Ovary (tissue), 10 donors: ENCODE measurements at regions of chr7 and their contacts with region 1.

Region 1: GRCh38 chr7:111752022-111752582 is 189.8 kb upstream of the IMMP2L start:
- DNase-seq: peak in 4 of 5 donors; percentile 37 to 59 (median 44)
- H3K4me3 ChIP-seq: no peak overlapping the region
- H3K27ac ChIP-seq: no peak overlapping the region
- H3K4me1 ChIP-seq: no peaks in the 10 kb centered on the region
- H3K27me3 ChIP-seq: no peaks in the 10 kb centered on the region
- CTCF ChIP-seq: peak in 1 of 3 donors; percentile 55
- EP300 ChIP-seq: no peak
- POLR2A ChIP-seq: no peak

Region 2: GRCh38 chr7:111561885-111562732 is 190.0 kb before region 1 on chr7 and contains the start of gene IMMP2L:
- intact Hi-C with region 1: no loop called
- DNase-seq: peak; percentile 86 to 95 (median 92)
- H3K4me3 ChIP-seq: peak within 1 kb of the TSS; percentile 63
- H3K27ac ChIP-seq: peak within 1 kb of the TSS; percentile 75 to 78
- H3K4me1 ChIP-seq: peaks cover 2% of the 10 kb centered on the region
- H3K27me3 ChIP-seq: no peaks in the 10 kb centered on the region
- CTCF ChIP-seq: peak in 2 of 3 donors; percentile 41 to 43
- EP300 ChIP-seq: no peak
- POLR2A ChIP-seq: peak; percentile 86
- total RNA-seq, gene IMMP2L: 19.8 to 36.9 (median 32.8) TPM

Region 3: GRCh38 chr7:112414855-112415490 is 662.9 kb after region 1 on chr7:
- intact Hi-C with region 1: loop called in 1 of 4 experiments (anchors 10 kb)
- DNase-seq: no peak
- H3K4me3 ChIP-seq: no peak overlapping the region
- H3K27ac ChIP-seq: no peak overlapping the region
- H3K4me1 ChIP-seq: no peaks in the 10 kb centered on the region
- H3K27me3 ChIP-seq: no peaks in the 10 kb centered on the region
- CTCF ChIP-seq: peak in 1 of 3 donors; percentile 16
- EP300 ChIP-seq: no peak
- POLR2A ChIP-seq: no peak

Region 4: GRCh38 chr7:112495810-112496462 is 743.8 kb after region 1 on chr7:
- intact Hi-C with region 1: loop called in 2 of 4 experiments (anchors 10 kb)
- DNase-seq: peak in 4 of 5 donors; percentile 23 to 59 (median 41)
- H3K4me3 ChIP-seq: no peak overlapping the region
- H3K27ac ChIP-seq: no peak overlapping the region
- H3K4me1 ChIP-seq: no peaks in the 10 kb centered on the region
- H3K27me3 ChIP-seq: no peaks in the 10 kb centered on the region
- CTCF ChIP-seq: peak in 2 of 3 donors; percentile 38 to 45
- EP300 ChIP-seq: no peak
- POLR2A ChIP-seq: no peak